HCT116 (cell line): ENCODE measurements at regions of chr16 and their contacts with region 1.

Region 1: GRCh38 chr16:84504420-84505248 is at the start of gene MEAK7:
- DNase-seq: peak; percentile 98
- ATAC-seq: peak; percentile 84
- H3K4me3 ChIP-seq: peak within 1 kb of the TSS; percentile 88 to 98
- H3K27ac ChIP-seq: peak within 1 kb of the TSS; percentile 82
- H3K4me1 ChIP-seq: peaks cover 54 to 69% of the 10 kb centered on the region in 2 experiments
- H3K27me3 ChIP-seq: no peaks in the 10 kb centered on the region
- CTCF ChIP-seq: no peak
- POLR2A ChIP-seq: peak; percentile 67
- RAD21 ChIP-seq: no peak
- total RNA-seq, gene MEAK7: 32.2 TPM

Region 2: DNA sequence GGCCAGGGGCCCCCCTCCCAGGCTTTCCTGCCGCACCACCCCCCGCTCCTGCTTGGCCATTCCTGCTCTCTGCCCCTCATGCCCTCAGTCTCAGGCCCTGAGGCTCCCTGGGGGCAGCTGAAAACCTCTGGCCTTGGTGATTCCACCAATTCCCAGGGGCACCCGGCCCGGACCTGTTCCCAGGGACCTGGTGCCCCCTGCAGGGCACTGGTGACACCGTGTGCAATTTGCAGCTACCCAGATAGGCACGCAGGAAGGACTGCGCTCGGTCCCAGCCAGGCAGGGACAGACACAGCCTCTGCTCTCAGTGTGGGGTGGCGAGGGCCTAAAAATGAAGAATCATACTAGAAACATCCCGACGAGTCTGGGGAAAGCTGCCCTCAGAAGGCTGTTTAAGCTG is 196.5 kb before region 1 on chr16:
- CTCF ChIA-PET with region 1: interaction called, 12 read pairs
- POLR2A ChIA-PET with region 1: no interaction called
- RAD21 ChIA-PET with region 1: no interaction called
- intact Hi-C with region 1: no loop called
- DNase-seq: peak; percentile 63
- ATAC-seq: peak; percentile 89
- H3K4me3 ChIP-seq: no peak overlapping the region
- H3K27ac ChIP-seq: no peak overlapping the region
- H3K4me1 ChIP-seq: peaks cover 6 to 16% of the 10 kb centered on the region in 2 experiments; a peak in 3 of 4 replicates
- H3K27me3 ChIP-seq: no peaks in the 10 kb centered on the region
- CTCF ChIP-seq: peak; percentile 88 to 95 (median 93)
- POLR2A ChIP-seq: no peak
- RAD21 ChIP-seq: peak; percentile 98

Region 3: GRCh38 chr16:84518748-84519341 is 14.2 kb after region 1 on chr16:
- CTCF ChIA-PET with region 1: interaction called, 24 read pairs
- POLR2A ChIA-PET with region 1: no interaction called
- RAD21 ChIA-PET with region 1: no interaction called
- intact Hi-C with region 1: no loop called
- DNase-seq: no peak
- ATAC-seq: no peak
- H3K4me3 ChIP-seq: no peak overlapping the region
- H3K27ac ChIP-seq: no peak overlapping the region
- H3K4me1 ChIP-seq: peaks cover 0 to 17% of the 10 kb centered on the region in 2 experiments; a peak in 2 of 4 replicates
- H3K27me3 ChIP-seq: no peaks in the 10 kb centered on the region; the same call in 1 of the 2 replicates
- CTCF ChIP-seq: no peak
- POLR2A ChIP-seq: no peak
- RAD21 ChIP-seq: no peak

Region 4: GRCh38 chr16:84617791-84618580 is 113.4 kb after region 1 on chr16 and contains the start of gene COTL1:
- CTCF ChIA-PET with region 1: interaction called, 44 read pairs
- POLR2A ChIA-PET with region 1: interaction called, 5 read pairs
- RAD21 ChIA-PET with region 1: interaction called in 1 of 2 experiments, 6 read pairs
- intact Hi-C with region 1: no loop called
- DNase-seq: peak; percentile 96
- ATAC-seq: peak; percentile 76
- H3K4me3 ChIP-seq: peak within 1 kb of the TSS; percentile 82 to 85
- H3K27ac ChIP-seq: peak within 1 kb of the TSS; percentile 86
- H3K4me1 ChIP-seq: peaks cover 18 to 64% of the 10 kb centered on the region in 2 experiments
- H3K27me3 ChIP-seq: no peaks in the 10 kb centered on the region
- CTCF ChIP-seq: no peak
- POLR2A ChIP-seq: peak; percentile 85
- RAD21 ChIP-seq: no peak
- total RNA-seq, gene COTL1: 276 TPM